ENCODE measurements at regions of chr20 and their contacts with region 1.

Region 1: GRCh38 chr20:51306503-51307358 is 235.8 kb downstream of the NFATC2 start:
- DNase-seq: no peak
- H3K4me3 ChIP-seq: no peak overlapping the region
- H3K27ac ChIP-seq: no peak overlapping the region
- H3K4me1 ChIP-seq: no peaks in the 10 kb centered on the region
- H3K27me3 ChIP-seq: no peaks in the 10 kb centered on the region
- CTCF ChIP-seq: peak; percentile 63 to 95 (median 84)
- POLR2A ChIP-seq: no peak

Region 2: GRCh38 chr20:50987592-50988210 is 319.0 kb before region 1 on chr20:
- intact Hi-C with region 1: loop called (anchors 5 kb)
- DNase-seq: no peak
- H3K4me3 ChIP-seq: no peak overlapping the region
- H3K27ac ChIP-seq: no peak overlapping the region
- H3K4me1 ChIP-seq: no peaks in the 10 kb centered on the region
- H3K27me3 ChIP-seq: no peaks in the 10 kb centered on the region
- CTCF ChIP-seq: peak; percentile 82 to 93 (median 91)
- POLR2A ChIP-seq: no peak

Measured in vagina (tissue), 2 donors.